ENCODE measurements at regions of chr9 and their contacts with region 1.

Region 1: DNA sequence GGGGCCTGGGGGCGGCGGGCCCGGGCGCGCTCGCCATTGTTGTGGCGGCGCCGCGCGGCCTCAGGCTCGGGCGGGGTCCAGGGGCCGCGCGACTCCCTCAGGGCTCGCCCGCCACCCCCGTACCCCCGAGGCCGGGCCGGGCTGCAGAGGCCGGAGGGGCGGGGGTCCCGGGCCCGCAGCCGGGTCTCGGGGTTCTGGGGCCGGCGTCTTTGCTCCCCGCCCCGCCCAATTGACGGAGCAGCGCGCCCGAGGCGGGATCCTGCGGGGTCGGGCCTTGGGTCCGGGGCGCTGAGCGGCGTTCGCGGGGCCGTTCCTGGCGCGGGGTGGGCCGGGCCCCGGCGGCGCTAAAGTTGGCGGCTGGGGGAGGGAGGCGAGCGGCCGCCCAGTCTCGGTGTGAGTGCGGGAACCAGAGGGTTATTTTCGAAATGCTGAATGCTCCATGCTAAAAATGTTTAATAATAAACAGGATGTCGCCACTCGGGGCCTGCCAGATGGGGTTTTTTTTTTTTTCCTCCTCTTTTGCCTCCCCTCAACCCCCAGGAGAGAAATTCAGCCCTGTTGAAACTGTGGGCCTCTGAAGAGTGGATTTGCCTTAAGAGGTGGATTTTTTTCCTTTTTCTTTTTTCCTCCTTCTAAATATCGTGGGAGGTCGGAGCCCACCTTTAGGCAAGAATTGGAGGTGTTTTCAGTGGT is 724 bp downstream of the PRRC2B start:
- DNase-seq: no peak
- H3K4me3 Mint-ChIP-seq: peak overlapping the region; percentile 83
- H3K27ac Mint-ChIP-seq: peak overlapping the region; percentile 73
- H3K4me1 Mint-ChIP-seq: peaks cover 27% of the 10 kb centered on the region
- H3K27me3 Mint-ChIP-seq: no peaks in the 10 kb centered on the region
- CTCF ChIP-seq: no peak

Region 2: DNA sequence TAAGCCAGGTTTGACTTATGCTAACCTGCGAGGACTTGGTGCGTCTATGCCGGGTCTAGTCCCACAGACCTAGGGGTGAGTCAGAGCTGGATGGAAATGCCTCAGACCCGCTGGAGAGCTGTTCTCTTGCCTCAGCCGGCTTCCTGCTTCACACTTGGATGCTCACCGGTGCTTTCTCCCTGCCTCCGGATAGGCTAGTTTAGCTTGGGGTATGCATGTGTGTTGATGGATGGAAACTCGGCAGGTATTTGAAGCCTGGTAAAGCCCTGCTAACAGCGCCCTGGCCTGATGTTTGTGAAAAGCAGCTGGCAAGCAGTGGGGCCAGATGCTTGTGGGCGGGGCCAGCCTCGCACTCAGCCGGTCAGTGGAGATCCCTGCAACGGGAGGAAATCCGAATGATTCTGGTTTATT is 28.6 kb after region 1 on chr9:
- CTCF ChIA-PET with region 1: interaction called, 3 read pairs
- intact Hi-C with region 1: loop called (anchors 2 kb)
- DNase-seq: peak; percentile 55
- H3K4me3 Mint-ChIP-seq: peak overlapping the region; percentile 46
- H3K27ac Mint-ChIP-seq: peak overlapping the region; percentile 47
- H3K4me1 Mint-ChIP-seq: peaks cover 48% of the 10 kb centered on the region
- H3K27me3 Mint-ChIP-seq: no peaks in the 10 kb centered on the region
- CTCF ChIP-seq: no peak

Region 3: DNA sequence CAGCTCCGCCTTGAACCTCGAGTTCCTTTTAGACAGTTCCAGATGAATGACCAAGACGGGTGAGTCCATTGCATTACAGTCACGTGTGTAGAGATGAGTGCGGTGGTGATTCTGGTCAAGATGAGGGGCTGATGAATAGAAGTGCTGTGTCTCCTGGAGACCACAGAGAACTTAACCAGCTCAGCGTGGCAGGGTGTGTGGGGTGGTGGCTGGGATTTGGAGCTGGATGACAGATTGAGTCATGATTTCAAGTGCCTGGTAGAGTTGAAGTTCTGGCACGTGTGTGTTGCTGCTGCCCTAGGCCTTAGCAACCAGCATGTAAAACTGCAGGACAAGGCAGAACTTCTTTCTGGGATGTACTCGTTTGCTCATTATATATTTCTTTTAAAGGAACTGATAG is 52.5 kb after region 1 on chr9:
- CTCF ChIA-PET with region 1: no interaction called
- intact Hi-C with region 1: loop called (anchors 5 kb)
- DNase-seq: no peak
- H3K4me3 Mint-ChIP-seq: no peak overlapping the region
- H3K27ac Mint-ChIP-seq: no peak overlapping the region
- H3K4me1 Mint-ChIP-seq: no peaks in the 10 kb centered on the region
- H3K27me3 Mint-ChIP-seq: no peaks in the 10 kb centered on the region
- CTCF ChIP-seq: no peak